Common myeloid progenitor, CD34-positive (primary cell): ENCODE measurements at regions of chr10 and their contacts with region 1.

Region 1: DNA sequence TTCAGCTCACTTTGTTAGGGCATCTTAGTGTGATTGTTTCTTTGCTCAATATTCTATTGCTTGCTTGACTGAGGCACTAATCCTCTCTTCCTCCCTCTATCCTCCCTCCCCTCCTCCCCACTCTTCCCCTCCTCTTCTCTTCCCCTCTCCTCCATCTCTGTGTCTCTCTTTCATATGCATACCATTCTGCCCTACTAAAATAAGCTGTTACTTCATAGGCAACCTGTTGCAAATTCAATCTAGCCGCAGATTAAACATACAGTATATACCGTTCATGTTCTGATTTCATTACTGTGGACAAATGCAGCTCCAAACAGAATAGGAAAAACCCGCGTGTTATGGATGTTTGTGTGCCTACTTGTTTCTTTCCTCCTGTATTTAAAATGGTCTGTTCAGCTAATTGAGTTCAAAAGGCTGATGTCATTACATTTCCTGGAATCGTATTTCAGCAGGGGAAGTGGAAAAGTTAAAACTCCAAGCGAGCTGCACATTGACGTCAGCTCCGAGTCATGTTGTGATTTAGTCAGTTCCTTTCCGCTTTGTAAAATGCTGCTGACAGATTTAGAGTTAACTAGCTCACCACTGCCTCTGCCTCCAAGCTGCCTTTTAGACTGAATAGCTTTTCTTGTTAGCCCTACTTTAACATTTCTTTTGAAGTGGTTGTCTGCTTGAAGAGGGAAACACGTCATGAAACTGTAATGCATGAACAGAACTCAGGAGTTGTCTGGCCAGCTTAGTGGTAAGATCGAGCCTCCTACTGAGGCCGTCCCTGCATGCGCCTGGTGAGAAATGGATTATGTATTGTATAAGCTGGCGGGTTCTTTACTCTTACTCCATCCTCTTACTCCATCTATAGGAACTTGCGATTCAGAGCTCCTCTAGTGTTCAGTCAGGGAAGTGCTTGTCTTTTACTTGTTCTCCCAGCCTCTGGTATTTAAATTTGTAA is 69.0 kb downstream of the CREM start:
- DNase-seq: peak; percentile 96 to 97 (median 96)
- H3K4me3 ChIP-seq: peak overlapping the region; percentile 20 to 76 (median 59)
- H3K27ac ChIP-seq: peak overlapping the region; percentile 42 to 88
- H3K4me1 ChIP-seq: peaks cover 2 to 28% (median 18%) of the 10 kb centered on the region in 4 experiments
- H3K27me3 ChIP-seq: no peaks in the 10 kb centered on the region

Region 2: GRCh38 chr10:35056133-35056532 is 139.5 kb before region 1 on chr10:
- CTCF ChIA-PET with region 1: no interaction called
- POLR2A ChIA-PET with region 1: no interaction called
- DNase-seq: no peak
- H3K4me3 ChIP-seq: no peak overlapping the region
- H3K27ac ChIP-seq: no peak overlapping the region
- H3K4me1 ChIP-seq: peaks cover 0 to 16% (median 12%) of the 10 kb centered on the region in 4 experiments
- H3K27me3 ChIP-seq: no peaks in the 10 kb centered on the region

Region 3: GRCh38 chr10:35119378-35119777 is 76.3 kb before region 1 on chr10:
- CTCF ChIA-PET with region 1: interaction called, 35 read pairs
- POLR2A ChIA-PET with region 1: interaction called, 7 read pairs
- DNase-seq: no peak
- H3K4me3 ChIP-seq: no peak overlapping the region
- H3K27ac ChIP-seq: no peak overlapping the region
- H3K4me1 ChIP-seq: no peaks in the 10 kb centered on the region
- H3K27me3 ChIP-seq: no peaks in the 10 kb centered on the region

Region 4: DNA sequence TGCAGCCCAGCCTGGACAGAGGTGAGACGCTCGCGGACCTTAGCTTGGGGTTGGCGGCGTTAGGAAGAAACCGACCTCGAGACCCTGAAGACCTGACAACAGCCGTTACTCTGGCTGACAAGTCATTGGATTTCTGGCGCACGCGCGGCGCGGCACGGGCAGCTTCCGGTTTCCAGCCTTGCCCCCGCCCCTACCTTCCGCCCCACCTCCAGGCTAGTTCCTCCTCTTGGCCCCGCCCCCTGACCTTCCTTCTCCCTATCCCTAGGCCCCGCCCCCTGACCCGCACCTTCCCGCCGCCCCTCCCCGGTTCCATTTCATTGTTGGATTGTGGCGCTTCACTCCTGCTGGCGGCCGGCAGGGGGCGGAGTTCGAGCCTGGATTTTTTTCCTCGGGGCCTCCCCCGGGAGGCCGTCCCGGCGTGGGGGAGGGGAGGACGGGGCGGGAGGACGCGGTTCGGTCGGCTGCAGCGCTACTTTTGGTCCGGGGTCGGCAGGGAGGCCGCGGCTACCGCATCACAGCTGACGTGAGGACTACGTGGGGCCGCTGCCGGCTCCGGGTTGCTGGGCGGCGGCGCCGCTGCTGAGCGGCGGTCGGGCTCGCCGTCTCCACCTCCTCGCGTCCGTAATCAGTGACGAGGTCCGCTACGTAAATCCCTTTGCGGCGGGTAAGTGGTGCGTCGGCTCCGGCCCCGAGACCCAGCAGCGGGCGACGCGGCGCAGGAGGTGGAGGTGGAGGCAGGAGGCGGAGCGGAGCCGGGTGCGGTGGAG is 68.9 kb before region 1 on chr10 and contains the start of gene CREM:
- CTCF ChIA-PET with region 1: interaction called, 35 read pairs
- POLR2A ChIA-PET with region 1: interaction called, 25 read pairs
- DNase-seq: peak; percentile 97 to 98 (median 98)
- H3K4me3 ChIP-seq: peak within 1 kb of the TSS; percentile 75 to 94 (median 86)
- H3K27ac ChIP-seq: peak within 1 kb of the TSS; percentile 98 to 99
- H3K4me1 ChIP-seq: peaks cover 1 to 21% (median 11%) of the 10 kb centered on the region in 4 experiments
- H3K27me3 ChIP-seq: no peaks in the 10 kb centered on the region

Region 5: DNA sequence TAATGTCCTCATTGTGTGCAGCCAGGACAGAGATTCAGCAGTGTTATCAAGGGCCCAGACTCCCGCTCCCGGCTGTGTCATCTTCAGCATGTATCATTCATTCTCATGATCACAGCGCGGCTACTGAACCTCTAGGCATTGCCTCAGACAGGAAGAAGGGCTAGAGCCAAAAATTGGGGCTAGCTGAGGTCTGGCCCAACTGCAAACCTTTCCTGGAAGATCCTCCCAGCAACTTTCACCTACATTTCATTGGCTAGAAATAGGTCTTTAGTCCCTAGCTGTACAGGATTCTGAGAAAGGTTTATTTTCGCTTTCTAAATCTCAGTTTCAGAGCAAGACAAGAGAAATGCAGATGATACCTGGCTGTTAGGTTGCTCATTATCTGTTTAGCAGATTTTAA is 12.9 kb after region 1 on chr10:
- CTCF ChIA-PET with region 1: interaction called, 10 read pairs
- POLR2A ChIA-PET with region 1: interaction called, 9 read pairs
- DNase-seq: no peak
- H3K4me3 ChIP-seq: no peak overlapping the region
- H3K27ac ChIP-seq: no peak overlapping the region
- H3K4me1 ChIP-seq: peaks cover 2 to 22% (median 10%) of the 10 kb centered on the region in 4 experiments
- H3K27me3 ChIP-seq: no peaks in the 10 kb centered on the region

Region 6: DNA sequence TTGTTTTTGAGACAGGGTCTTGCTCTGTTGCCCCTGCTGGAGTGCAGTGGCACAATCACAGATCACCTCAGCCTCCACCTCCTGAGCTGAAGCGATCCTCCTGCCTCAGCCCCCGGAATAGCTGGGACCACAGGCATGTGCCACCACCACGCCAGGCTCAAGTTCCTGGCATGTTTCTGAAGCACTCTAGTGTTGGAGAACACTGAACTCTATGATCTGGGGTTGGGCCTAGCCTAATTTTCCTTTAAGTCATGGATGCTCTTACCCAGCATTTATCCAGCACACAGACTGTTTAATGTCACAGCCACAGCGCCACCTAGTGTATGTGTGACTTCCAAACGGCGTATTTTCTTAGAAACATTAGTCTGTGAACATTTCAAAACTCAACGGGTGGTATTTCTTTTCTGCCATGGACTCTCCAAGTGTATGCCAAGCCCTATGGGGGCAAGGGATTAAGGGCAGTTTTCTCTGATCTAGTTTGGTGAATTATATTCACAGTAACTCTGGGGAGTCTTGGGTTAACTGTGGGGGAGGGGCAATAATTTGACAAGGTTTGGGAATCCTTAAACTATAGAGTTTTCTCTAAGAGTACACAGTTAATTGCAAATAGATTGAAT is 22.8 kb after region 1 on chr10:
- CTCF ChIA-PET with region 1: interaction called, 25 read pairs
- POLR2A ChIA-PET with region 1: interaction called, 6 read pairs
- DNase-seq: peak; percentile 88 to 95 (median 93)
- H3K4me3 ChIP-seq: no peak overlapping the region
- H3K27ac ChIP-seq: no peak overlapping the region
- H3K4me1 ChIP-seq: peaks cover 0 to 16% (median 7%) of the 10 kb centered on the region in 4 experiments
- H3K27me3 ChIP-seq: no peaks in the 10 kb centered on the region